ENCODE measurements at regions of chr1 and their contacts with region 1.

Region 1: GRCh38 chr1:111720977-111721786 is 18.0 kb downstream of the INKA2 start:
- DNase-seq: peak in 1 of 5 donors; percentile 51
- ATAC-seq: peak in 2 of 4 donors; percentile 5
- H3K4me3 ChIP-seq: no peak overlapping the region
- H3K27ac ChIP-seq: peak overlapping the region; percentile 74 to 95 (median 91)
- H3K4me1 ChIP-seq: peaks cover 13 to 74% (median 53%) of the 10 kb centered on the region in 12 donors
- H3K27me3 ChIP-seq: no peaks in the 10 kb centered on the region
- CTCF ChIP-seq: no peak
- POLR2A ChIP-seq: no peak

Region 2: DNA sequence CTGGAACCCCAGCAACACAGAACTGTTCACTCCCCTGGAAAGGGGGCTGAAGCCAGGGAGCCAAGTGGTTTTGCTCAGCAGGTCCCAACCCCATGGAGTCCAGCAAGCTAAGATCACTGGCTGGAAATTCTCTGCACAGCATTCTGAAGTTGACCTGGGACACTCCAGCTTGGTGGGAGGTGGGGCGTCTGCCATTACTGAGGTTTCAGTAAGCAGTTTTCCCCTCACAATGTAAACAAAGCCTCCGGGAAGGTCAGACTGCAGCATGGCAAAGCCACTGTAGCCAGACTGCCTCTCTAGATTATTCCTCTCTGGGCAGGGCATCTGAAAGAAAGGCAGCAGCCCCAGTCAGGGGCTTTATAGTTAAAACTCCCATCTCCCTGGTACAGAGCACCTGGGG is 41.6 kb before region 1 on chr1:
- intact Hi-C with region 1: no loop called
- DNase-seq: no peak
- ATAC-seq: no peak
- H3K4me3 ChIP-seq: no peak overlapping the region
- H3K27ac ChIP-seq: peak overlapping the region in 1 of 12 donors; percentile 23
- H3K4me1 ChIP-seq: peaks cover 0 to 6% (median 0%) of the 10 kb centered on the region in 12 donors
- H3K27me3 ChIP-seq: no peaks in the 10 kb centered on the region
- CTCF ChIP-seq: no peak
- POLR2A ChIP-seq: no peak

Region 3: DNA sequence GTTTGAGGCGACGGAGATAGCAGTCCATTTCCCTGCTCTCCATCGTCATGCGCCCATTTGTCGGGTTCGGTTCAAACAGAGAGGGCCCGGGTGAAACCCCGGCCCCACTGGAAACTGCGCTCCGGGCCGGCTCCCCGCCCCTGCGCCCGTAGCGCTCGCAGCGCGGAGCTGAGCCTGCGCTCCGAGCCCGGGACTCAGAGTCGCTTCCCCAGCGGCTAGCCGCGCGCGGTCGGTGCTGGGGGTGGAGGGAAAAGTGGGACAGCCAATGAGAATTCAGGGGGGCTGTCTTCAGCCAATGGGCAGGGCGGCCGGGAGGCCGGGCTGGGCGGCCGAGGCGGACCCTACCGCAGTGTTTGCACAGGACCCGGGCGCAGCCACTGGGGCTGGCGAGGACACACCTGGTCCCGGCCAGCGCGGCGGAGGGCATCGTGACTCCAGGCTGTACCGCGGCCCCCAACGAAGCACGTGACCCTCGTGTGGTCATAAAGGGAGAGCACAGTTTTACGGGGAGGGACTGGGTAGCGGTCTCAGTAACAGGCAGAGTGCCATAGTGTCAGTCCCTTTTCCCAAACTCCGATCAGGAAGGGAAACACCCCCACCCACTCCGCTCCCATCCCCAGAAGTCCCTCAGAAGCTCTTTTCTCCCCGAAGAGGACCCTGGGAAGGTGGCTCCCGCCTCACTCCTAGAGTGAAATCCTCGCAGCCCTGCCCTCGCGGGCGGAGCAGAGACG is 18.2 kb after region 1 on chr1 and contains the start of gene INKA2:
- intact Hi-C with region 1: loop called in 6 of 10 experiments (anchors 1 to 2 kb)
- DNase-seq: peak; percentile 93 to 96 (median 95)
- ATAC-seq: peak; percentile 84 to 88 (median 87)
- H3K4me3 ChIP-seq: peak within 1 kb of the TSS; percentile 61 to 95 (median 80)
- H3K27ac ChIP-seq: peak within 1 kb of the TSS; percentile 92 to 100 (median 98)
- H3K4me1 ChIP-seq: peaks cover 13 to 77% (median 59%) of the 10 kb centered on the region in 12 donors
- H3K27me3 ChIP-seq: peaks cover 0 to 8% (median 0%) of the 10 kb centered on the region in 9 donors
- CTCF ChIP-seq: peak in 1 of 12 donors; percentile 10
- POLR2A ChIP-seq: peak; percentile 8 to 93
- total RNA-seq, gene INKA2: 10.1 to 33.2 (median 14.0) TPM

Region 4: GRCh38 chr1:111747282-111747734 is 26.1 kb after region 1 on chr1:
- intact Hi-C with region 1: loop called in 3 of 10 experiments (anchors 2 to 5 kb)
- DNase-seq: peak in 4 of 5 donors; percentile 62 to 73 (median 64)
- ATAC-seq: peak in 3 of 4 donors; percentile 48 to 60 (median 51)
- H3K4me3 ChIP-seq: no peak overlapping the region
- H3K27ac ChIP-seq: no peak overlapping the region
- H3K4me1 ChIP-seq: peaks cover 0 to 37% (median 15%) of the 10 kb centered on the region in 12 donors
- H3K27me3 ChIP-seq: no peaks in the 10 kb centered on the region
- CTCF ChIP-seq: peak; percentile 49 to 73 (median 62)
- POLR2A ChIP-seq: no peak